A673 (cell line): ENCODE measurements at regions of chrX and their contacts with region 1.

Region 1: DNA sequence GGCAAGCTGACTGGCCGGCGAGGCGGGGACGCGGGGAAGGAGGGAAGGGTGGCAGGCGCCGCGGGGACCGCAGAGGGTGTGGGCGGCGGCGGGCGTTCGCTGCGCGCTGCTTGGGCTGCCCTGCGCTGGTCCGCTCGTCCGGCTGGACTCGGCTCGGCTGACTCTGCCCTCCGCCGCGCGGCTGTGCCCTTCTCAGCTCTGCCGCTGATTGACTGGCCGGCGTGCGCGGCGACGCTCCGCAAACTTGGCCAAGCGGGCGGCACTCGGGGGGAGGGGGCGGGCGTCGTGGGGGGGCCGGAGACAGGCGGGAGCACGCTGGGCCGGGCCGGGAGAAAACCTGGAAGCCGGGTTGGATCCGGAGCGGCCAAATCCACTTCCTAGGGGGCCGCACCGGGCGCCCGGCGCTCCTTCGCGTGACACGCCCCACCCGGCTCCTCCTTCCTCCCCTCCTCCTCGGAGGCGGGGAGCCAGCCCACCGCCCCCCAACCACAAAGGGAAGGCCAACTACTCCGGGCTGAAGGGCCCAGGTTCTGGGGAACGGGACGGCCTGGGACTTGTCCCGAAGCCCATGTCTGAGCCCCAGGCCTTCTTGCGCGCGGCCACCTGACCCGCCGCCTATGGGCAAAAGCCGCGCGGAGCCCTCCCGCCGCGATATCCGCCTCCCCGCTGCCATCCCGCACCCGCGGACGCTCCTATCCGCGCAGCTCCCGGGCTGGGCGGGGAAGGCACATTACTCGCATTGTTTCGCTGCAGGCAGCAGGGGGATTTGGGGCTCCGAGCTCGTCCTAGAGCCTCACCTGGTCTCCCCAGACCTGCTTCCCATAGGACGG is at the start of gene GPC4:
- DNase-seq: peak; percentile 81
- H3K4me3 ChIP-seq: peak within 1 kb of the TSS; percentile 65
- H3K27ac ChIP-seq: peak within 1 kb of the TSS; percentile 65
- H3K4me1 ChIP-seq: peaks cover under 1% of the 10 kb centered on the region
- H3K27me3 ChIP-seq: no peaks in the 10 kb centered on the region
- CTCF ChIP-seq: no peak
- total RNA-seq, gene GPC4: 17.8 and 19.4 TPM in 2 replicates

Region 2: DNA sequence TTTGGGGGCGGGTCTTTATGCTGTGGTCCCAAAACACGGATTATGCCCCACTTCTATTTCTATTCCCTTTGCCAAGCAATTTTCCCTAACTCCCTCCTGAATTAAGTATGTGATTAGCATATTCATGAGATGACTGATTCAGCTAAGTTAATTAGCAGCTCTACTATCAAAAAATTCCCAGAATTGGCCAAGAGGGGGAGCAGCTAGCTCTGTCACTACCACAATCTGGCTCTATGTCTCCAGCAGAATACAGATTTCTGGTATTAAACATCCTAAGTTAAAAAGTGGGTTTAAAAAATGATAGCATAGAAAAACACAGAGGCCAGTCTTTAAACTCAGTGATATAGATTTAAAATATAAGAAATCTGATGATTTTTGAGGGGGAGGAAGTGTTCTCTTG is 80.5 kb before region 1 on chrX:
- CTCF ChIA-PET with region 1: no interaction called
- POLR2A ChIA-PET with region 1: no interaction called
- intact Hi-C with region 1: loop called (anchors 5 kb)
- DNase-seq: peak; percentile 82
- H3K4me3 ChIP-seq: no peak overlapping the region
- H3K27ac ChIP-seq: no peak overlapping the region
- H3K4me1 ChIP-seq: peaks cover 17% of the 10 kb centered on the region
- H3K27me3 ChIP-seq: no peaks in the 10 kb centered on the region
- CTCF ChIP-seq: peak; percentile 75

Region 3: DNA sequence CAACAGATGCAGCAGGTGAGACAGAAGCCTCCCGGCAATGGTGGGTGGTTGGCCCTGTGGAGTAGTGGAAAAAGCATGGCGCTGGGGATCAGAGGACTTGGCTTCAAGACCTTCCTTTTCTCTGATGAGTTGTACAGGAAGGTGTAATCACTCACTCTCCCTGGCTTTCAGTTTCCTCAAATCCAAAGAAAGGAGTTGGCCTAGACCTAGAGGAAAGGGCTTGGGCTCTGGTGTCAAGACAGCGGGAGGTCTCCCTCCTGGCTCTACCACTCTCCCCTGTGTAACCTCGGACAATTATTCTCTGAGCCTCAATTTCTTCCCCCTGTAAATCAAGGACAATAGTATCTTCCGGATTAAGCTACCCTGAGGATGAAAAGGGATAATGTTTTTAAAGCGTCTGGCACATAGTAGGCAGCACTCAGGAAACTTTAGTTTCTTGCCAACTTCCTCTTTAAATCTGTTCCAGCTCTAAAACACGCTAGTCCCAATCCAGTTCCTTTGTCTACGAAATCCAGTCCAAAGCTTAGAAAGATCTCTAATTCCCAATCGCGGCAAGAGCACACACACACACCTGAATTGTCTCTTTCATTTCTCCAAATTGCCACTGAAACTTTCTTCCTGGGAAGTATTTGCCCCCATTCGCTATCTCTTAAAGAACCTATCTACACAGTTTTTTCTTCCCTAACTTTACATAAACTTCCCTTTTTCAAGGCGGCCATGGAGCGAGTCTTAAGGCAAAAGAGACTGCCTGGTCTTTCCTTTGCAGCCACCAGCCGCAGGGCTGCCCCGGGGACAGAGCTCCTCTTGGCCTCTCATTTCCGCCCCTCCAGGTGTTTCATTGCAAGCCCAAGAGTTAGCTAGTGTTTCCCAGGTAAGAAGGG is 29.7 kb after region 1 on chrX:
- CTCF ChIA-PET with region 1: interaction called, 3 read pairs
- POLR2A ChIA-PET with region 1: no interaction called
- intact Hi-C with region 1: loop called (anchors 2 kb)
- DNase-seq: peak; percentile 57
- H3K4me3 ChIP-seq: peak overlapping the region; percentile 38
- H3K27ac ChIP-seq: no peak overlapping the region
- H3K4me1 ChIP-seq: no peaks in the 10 kb centered on the region
- H3K27me3 ChIP-seq: no peaks in the 10 kb centered on the region
- CTCF ChIP-seq: no peak

Region 4: GRCh38 chrX:133655275-133656265 is 240.1 kb after region 1 on chrX:
- CTCF ChIA-PET with region 1: no interaction called
- POLR2A ChIA-PET with region 1: no interaction called
- intact Hi-C with region 1: loop called (anchors 10 kb)
- DNase-seq: no peak
- H3K4me3 ChIP-seq: no peak overlapping the region
- H3K27ac ChIP-seq: no peak overlapping the region
- H3K4me1 ChIP-seq: no peaks in the 10 kb centered on the region
- H3K27me3 ChIP-seq: no peaks in the 10 kb centered on the region
- CTCF ChIP-seq: no peak

Region 5: DNA sequence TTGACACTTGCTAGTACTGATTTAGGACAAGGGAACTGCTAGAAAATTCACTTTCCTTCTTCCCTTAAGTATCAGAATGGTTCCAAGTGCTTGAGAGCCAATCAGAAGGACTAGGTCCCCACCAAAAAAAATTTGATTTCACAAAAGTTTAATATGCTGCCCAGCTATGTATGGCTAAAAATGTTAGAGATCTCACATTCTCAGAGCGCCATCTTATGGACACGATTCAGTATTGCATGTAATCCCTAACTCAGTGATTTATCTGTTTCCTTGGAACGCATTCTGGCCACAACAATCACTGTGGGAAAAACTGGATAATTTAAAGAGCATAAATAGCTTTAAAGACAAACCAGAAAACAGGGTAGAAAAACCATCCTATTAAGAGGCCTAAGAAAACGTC is 254.9 kb after region 1 on chrX:
- CTCF ChIA-PET with region 1: interaction called, 6 read pairs
- POLR2A ChIA-PET with region 1: no interaction called
- intact Hi-C with region 1: loop called (anchors 1 kb)
- DNase-seq: peak; percentile 64
- H3K4me3 ChIP-seq: no peak overlapping the region
- H3K27ac ChIP-seq: no peak overlapping the region
- H3K4me1 ChIP-seq: no peaks in the 10 kb centered on the region
- H3K27me3 ChIP-seq: no peaks in the 10 kb centered on the region
- CTCF ChIP-seq: peak; percentile 84